ENCODE measurements at regions of chr6 and their contacts with region 1.

Region 1: GRCh38 chr6:29847871-29848630 is 20.4 kb downstream of the HLA-G start:
- DNase-seq: peak; percentile 71 to 87 (median 80)
- ATAC-seq: peak; percentile 90
- H3K4me3 ChIP-seq: no peak overlapping the region
- H3K4me3 Mint-ChIP-seq: peak overlapping the region in 5 of 10 donors; percentile 5 to 49 (median 16)
- H3K27ac ChIP-seq: no peak overlapping the region
- H3K27ac Mint-ChIP-seq: peak overlapping the region in 1 of 9 donors; percentile 14
- H3K4me1 ChIP-seq: no peaks in the 10 kb centered on the region
- H3K4me1 Mint-ChIP-seq: peaks cover 0 to 24% (median 13%) of the 10 kb centered on the region in 7 donors
- H3K27me3 ChIP-seq: peaks cover 9 to 13% of the 10 kb centered on the region in 2 donors
- H3K27me3 Mint-ChIP-seq: peaks cover 54 to 73% (median 67%) of the 10 kb centered on the region in 5 donors

Region 2: GRCh38 chr6:29887819-29888776 is 40.0 kb after region 1 on chr6:
- CTCF ChIA-PET with region 1: no interaction called
- POLR2A ChIA-PET with region 1: interaction called, 3 read pairs
- intact Hi-C with region 1: loop called (anchors 2 to 5 kb)
- DNase-seq: peak in 8 of 9 donors; percentile 36 to 89 (median 72)
- ATAC-seq: peak; percentile 91
- H3K4me3 ChIP-seq: peak overlapping the region; percentile 73
- H3K4me3 Mint-ChIP-seq: peak overlapping the region in 9 of 10 donors; percentile 79 to 95 (median 94)
- H3K27ac ChIP-seq: peak overlapping the region; percentile 94
- H3K27ac Mint-ChIP-seq: peak overlapping the region in 8 of 9 donors; percentile 72 to 98 (median 94)
- H3K4me1 ChIP-seq: peaks cover 3 to 7% of the 10 kb centered on the region in 2 donors
- H3K4me1 Mint-ChIP-seq: peaks cover 0 to 27% (median 20%) of the 10 kb centered on the region in 7 donors
- H3K27me3 ChIP-seq: no peaks in the 10 kb centered on the region
- H3K27me3 Mint-ChIP-seq: peaks cover 0 to 18% (median 0%) of the 10 kb centered on the region in 5 donors

Region 3: GRCh38 chr6:29926413-29927274 is 78.6 kb after region 1 on chr6:
- CTCF ChIA-PET with region 1: no interaction called
- POLR2A ChIA-PET with region 1: no interaction called
- intact Hi-C with region 1: loop called in 1 of 2 experiments (anchors 5 kb)
- DNase-seq: peak in 8 of 9 donors; percentile 40 to 90 (median 78)
- ATAC-seq: peak; percentile 96
- H3K4me3 ChIP-seq: peak overlapping the region; percentile 68
- H3K4me3 Mint-ChIP-seq: peak overlapping the region in 9 of 10 donors; percentile 83 to 97 (median 94)
- H3K27ac ChIP-seq: peak overlapping the region; percentile 95
- H3K27ac Mint-ChIP-seq: peak overlapping the region in 8 of 9 donors; percentile 90 to 99 (median 97)
- H3K4me1 ChIP-seq: peaks cover 4 to 15% of the 10 kb centered on the region in 2 donors
- H3K4me1 Mint-ChIP-seq: peaks cover 1 to 51% (median 15%) of the 10 kb centered on the region in 7 donors
- H3K27me3 ChIP-seq: no peaks in the 10 kb centered on the region
- H3K27me3 Mint-ChIP-seq: peaks cover 0 to 3% (median 0%) of the 10 kb centered on the region in 5 donors

Region 4: DNA sequence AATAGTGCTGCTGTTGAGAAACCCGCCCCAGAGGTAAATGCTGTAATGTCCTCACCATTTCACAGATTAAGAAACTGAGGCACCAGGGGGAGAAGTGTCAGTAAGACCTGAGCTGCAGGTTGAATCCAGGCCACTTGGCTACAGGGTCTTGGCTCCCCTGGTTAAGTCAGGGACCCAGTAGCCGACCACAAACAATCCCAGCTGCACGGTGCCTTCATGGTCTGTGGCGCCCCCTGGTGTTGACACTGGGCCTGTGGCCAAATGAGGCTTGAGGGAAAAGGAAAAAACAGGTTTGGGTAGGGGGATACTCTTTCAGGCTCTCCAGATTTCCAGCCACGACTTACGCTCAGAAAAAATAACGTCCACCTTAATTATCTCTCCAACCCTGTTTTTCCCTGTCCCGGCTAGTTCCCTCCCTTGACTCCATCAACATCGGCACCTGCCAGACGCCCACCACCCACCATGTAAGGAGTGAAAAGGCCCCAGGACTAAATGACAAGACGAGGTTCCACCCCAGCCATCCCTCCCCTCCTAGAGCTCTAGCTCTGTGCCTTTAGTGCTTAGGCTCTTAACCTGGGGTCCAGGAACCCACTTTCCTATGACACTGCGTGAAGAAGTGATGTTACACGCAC is 165.4 kb after region 1 on chr6:
- CTCF ChIA-PET with region 1: interaction called, 20 read pairs
- POLR2A ChIA-PET with region 1: interaction called, 3 read pairs
- intact Hi-C with region 1: loop called (anchors 1 kb)
- DNase-seq: peak in 8 of 9 donors; percentile 13 to 47 (median 32)
- ATAC-seq: peak; percentile 57
- H3K4me3 ChIP-seq: no peak overlapping the region
- H3K4me3 Mint-ChIP-seq: no peak overlapping the region
- H3K27ac ChIP-seq: no peak overlapping the region
- H3K27ac Mint-ChIP-seq: peak overlapping the region in 1 of 9 donors; percentile 12
- H3K4me1 ChIP-seq: no peaks in the 10 kb centered on the region
- H3K4me1 Mint-ChIP-seq: peaks cover 0 to 4% (median 0%) of the 10 kb centered on the region in 7 donors
- H3K27me3 ChIP-seq: peaks cover 0 to 3% of the 10 kb centered on the region in 2 donors
- H3K27me3 Mint-ChIP-seq: peaks cover 4 to 34% (median 15%) of the 10 kb centered on the region in 5 donors

Region 5: GRCh38 chr6:30130887-30131862 is 283.1 kb after region 1 on chr6:
- CTCF ChIA-PET with region 1: interaction called, 6 read pairs
- POLR2A ChIA-PET with region 1: no interaction called
- intact Hi-C with region 1: loop called (anchors 1 kb)
- DNase-seq: peak; percentile 21 to 83 (median 76)
- ATAC-seq: peak; percentile 99
- H3K4me3 ChIP-seq: no peak overlapping the region
- H3K4me3 Mint-ChIP-seq: peak overlapping the region in 6 of 10 donors; percentile 2 to 44 (median 30)
- H3K27ac ChIP-seq: no peak overlapping the region
- H3K27ac Mint-ChIP-seq: peak overlapping the region in 3 of 9 donors; percentile 2 to 79 (median 7)
- H3K4me1 ChIP-seq: peaks cover 0 to 4% of the 10 kb centered on the region in 2 donors
- H3K4me1 Mint-ChIP-seq: peaks cover 3 to 23% (median 6%) of the 10 kb centered on the region in 7 donors
- H3K27me3 ChIP-seq: peaks cover 5 to 12% of the 10 kb centered on the region in 2 donors
- H3K27me3 Mint-ChIP-seq: peaks cover 63 to 83% (median 67%) of the 10 kb centered on the region in 5 donors

Measured in naive thymus-derived CD4-positive, alpha-beta T cell (primary cell).